Vagina (tissue), 2 donors: ENCODE measurements at regions of chr12 and their contacts with region 1.

Region 1: DNA sequence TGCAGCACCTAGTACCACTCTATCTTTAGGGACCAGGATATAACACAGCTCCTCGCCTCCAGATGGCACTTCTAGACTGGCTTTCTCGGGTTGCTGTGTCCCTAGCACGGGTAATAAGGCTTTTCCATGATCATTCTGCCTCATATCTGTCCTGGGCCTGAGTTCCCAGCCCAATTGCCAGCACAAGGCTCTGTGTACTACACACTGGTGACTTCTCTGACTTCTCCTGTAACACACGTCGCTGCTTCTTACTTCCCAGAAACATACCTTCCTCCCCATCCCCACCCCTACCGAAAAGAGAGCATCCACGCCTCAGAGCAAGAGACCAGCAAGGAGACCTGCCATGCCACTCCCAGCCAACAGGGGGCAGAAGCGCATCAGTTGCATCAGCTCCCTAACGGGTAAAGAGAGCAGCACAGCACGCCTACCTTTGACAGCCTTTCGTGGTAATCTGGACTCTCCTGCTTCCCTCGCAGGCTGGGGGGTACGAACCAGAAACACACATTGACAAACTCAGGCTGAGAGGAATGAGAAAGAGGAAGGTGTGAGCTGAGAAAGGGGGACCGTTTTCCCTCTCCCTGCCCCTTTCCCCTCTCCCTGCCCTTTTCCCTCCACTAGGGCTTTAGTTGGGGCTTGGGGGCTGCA is 21.2 kb upstream of the ZNF740 start:
- DNase-seq: no peak
- H3K4me3 ChIP-seq: no peak overlapping the region
- H3K27ac ChIP-seq: no peak overlapping the region
- H3K4me1 ChIP-seq: no peaks in the 10 kb centered on the region
- H3K27me3 ChIP-seq: no peaks in the 10 kb centered on the region
- CTCF ChIP-seq: peak; percentile 88 to 96 (median 93)
- POLR2A ChIP-seq: no peak

Region 2: DNA sequence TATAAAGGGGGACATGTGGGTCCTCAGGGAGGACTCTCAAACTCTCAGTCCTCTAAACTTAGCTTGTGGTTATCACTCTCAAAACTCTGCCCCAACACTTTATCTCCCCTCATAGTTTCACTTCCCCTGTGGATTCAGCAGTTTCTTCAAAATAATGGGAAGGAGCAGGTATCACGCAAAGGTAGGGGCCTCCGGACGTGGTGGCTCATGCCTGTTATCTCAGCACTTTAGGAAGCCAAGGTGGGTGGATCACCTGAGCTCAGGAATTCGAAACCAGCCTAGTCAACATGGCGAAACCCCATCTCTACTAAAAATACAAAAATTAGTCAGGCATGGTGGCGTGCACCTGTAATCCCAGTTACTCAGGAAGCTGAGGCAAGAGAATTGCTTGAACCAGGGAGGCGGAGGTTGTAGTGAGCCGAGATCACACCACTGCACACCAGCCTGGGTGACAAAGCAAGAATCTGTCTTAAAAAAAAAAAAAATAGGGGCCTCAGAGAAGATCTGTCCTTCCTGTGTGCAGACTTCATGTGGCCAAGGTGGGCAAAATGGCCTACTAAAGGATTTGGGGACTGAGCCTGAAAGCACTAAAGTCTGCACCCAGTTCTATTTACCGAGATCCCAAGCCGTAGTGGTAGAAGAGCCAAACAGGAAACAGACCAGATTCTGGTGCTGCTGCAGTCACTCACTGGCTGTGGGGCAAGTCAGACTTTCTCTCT is 41.3 kb after region 1 on chr12:
- intact Hi-C with region 1: loop called (anchors 5 kb)
- DNase-seq: no peak
- H3K4me3 ChIP-seq: no peak overlapping the region
- H3K27ac ChIP-seq: no peak overlapping the region
- H3K4me1 ChIP-seq: peaks cover 13% of the 10 kb centered on the region
- H3K27me3 ChIP-seq: no peaks in the 10 kb centered on the region
- CTCF ChIP-seq: no peak
- POLR2A ChIP-seq: no peak